Lower leg skin (tissue), 4 donors: ENCODE measurements at regions of chr6 and their contacts with region 1.

Region 1: DNA sequence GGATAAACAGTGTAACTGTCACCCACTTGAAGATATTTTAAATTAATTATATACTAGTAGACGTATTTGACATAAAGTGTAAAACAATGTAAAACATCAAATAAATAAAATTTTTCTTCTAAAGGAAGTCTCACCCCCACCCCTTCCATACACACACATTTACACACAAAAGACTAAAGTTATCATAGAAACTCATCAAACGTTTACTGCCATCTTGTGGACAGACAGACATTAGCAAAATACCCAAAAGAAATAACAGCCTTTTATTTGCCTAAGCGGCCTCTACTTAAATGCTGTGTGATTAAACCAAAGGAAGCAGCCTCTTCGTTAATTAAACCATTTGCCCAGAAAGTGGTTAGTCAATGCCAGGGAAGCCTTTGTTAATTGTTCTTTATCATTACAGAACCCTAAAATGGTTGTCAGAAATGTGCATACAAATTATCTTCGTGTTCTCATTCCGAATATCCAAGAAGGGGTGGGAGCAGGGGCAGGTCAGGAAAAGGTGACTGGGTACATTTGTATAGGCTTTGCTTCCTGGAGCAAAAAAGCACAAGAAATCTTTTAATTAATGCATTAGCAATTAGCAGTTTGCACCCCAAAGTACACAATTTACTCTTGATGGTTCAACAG is 176.2 kb upstream of the SASH1 start:
- DNase-seq: no peak
- H3K4me3 ChIP-seq: no peak overlapping the region
- CTCF ChIP-seq: no peak
- POLR2A ChIP-seq: no peak

Region 2: DNA sequence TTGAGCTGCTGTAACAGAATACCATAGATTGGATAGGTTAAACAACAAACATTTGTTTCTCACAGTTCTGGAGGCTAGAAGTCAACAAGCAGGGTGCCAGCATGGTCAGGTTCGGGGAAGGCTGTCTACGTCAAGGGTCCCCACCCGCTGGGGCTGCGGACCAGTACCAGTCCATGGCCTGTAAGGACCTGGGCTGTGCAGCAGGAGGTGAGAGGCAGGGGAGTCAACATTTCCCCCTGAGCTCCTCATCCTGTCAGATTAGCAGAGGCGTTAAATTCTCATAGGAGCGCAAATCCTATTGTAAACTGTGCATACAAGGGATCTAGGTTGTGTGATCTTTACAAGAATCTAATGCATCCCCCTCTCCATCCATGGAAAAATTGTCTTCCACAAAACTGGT is 1563.9 kb before region 1 on chr6:
- intact Hi-C with region 1: loop called (anchors 5 kb)
- DNase-seq: no peak
- H3K4me3 ChIP-seq: no peak overlapping the region
- CTCF ChIP-seq: no peak
- POLR2A ChIP-seq: no peak

Region 3: DNA sequence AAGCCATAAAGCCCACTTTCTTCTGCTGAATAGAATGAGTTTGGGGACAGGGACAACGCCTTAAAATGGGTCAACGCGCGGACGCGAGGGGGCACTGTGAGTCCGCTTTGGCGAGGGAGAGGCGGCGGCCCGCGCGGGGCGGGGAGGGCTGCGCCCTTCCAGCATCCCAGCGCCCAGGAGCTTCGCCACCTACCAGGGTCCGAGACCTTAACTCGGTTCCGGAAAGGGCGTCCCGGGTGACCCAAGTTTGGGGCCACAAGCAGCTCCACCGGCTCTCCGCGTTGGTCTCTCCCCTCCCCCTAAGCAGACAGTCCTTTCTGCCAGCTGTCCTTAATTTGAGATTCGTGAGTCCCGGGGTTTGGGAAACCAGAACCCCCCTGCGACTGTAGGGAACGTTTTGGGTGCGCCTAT is 659.7 kb before region 1 on chr6:
- intact Hi-C with region 1: loop called (anchors 5 kb)
- DNase-seq: peak in 1 of 2 donors; percentile 87
- H3K4me3 ChIP-seq: no peak overlapping the region
- CTCF ChIP-seq: no peak
- POLR2A ChIP-seq: no peak

Region 4: GRCh38 chr6:148231572-148231971 is 65.1 kb after region 1 on chr6:
- intact Hi-C with region 1: no loop called
- DNase-seq: no peak
- H3K4me3 ChIP-seq: no peak overlapping the region
- CTCF ChIP-seq: no peak
- POLR2A ChIP-seq: no peak

Region 5: GRCh38 chr6:149648148-149649145 is 1482.0 kb after region 1 on chr6 and contains the start of gene KATNA1:
- intact Hi-C with region 1: no loop called
- DNase-seq: peak; percentile 74 to 96
- H3K4me3 ChIP-seq: peak within 1 kb of the TSS; percentile 69
- CTCF ChIP-seq: peak in 1 of 3 donors; percentile 7
- POLR2A ChIP-seq: no peak
- total RNA-seq, gene KATNA1: 19.2 to 25.7 (median 23.3) TPM